ENCODE measurements at regions of chr7 and their contacts with region 1.

Region 1: GRCh38 chr7:148962823-148963582 is 65.3 kb downstream of the PDIA4 start:
- DNase-seq: peak in 34 of 35 experiments; percentile 25 to 82 (median 53)
- ATAC-seq: peak; percentile 44 to 64 (median 60)
- H3K4me3 ChIP-seq: peak overlapping the region; percentile 69 to 86
- H3K4me3 Mint-ChIP-seq: peak overlapping the region; percentile 85 to 90 (median 89)
- H3K27ac ChIP-seq: peak overlapping the region; percentile 73
- H3K27ac Mint-ChIP-seq: peak overlapping the region; percentile 90 to 93
- H3K4me1 ChIP-seq: peaks cover 0 to 33% of the 10 kb centered on the region in 2 experiments
- H3K4me1 Mint-ChIP-seq: peaks cover 20 to 27% (median 26%) of the 10 kb centered on the region in 3 donors
- H3K27me3 ChIP-seq: no peaks in the 10 kb centered on the region
- H3K27me3 Mint-ChIP-seq: no peaks in the 10 kb centered on the region

Region 2: GRCh38 chr7:148503875-148504487 is 459.0 kb before region 1 on chr7:
- CTCF ChIA-PET with region 1: interaction called, 6 to 11 read pairs
- POLR2A ChIA-PET with region 1: no interaction called
- DNase-seq: peak in 2 of 35 experiments; percentile 10 to 66
- ATAC-seq: no peak
- H3K4me3 ChIP-seq: no peak overlapping the region
- H3K4me3 Mint-ChIP-seq: no peak overlapping the region
- H3K27ac ChIP-seq: no peak overlapping the region
- H3K27ac Mint-ChIP-seq: peak overlapping the region in 1 of 2 donors; percentile 5
- H3K4me1 ChIP-seq: no peaks in the 10 kb centered on the region
- H3K4me1 Mint-ChIP-seq: peaks cover 5 to 15% (median 6%) of the 10 kb centered on the region in 3 donors
- H3K27me3 ChIP-seq: peaks cover 0 to 14% of the 10 kb centered on the region in 2 experiments
- H3K27me3 Mint-ChIP-seq: peaks cover 15 to 25% of the 10 kb centered on the region in 2 donors

Region 3: GRCh38 chr7:148575640-148576411 is 387.2 kb before region 1 on chr7:
- CTCF ChIA-PET with region 1: interaction called, 9 to 31 read pairs
- POLR2A ChIA-PET with region 1: no interaction called
- DNase-seq: peak; percentile 24 to 79 (median 60)
- ATAC-seq: peak; percentile 75 to 82 (median 80)
- H3K4me3 ChIP-seq: no peak overlapping the region
- H3K4me3 Mint-ChIP-seq: no peak overlapping the region
- H3K27ac ChIP-seq: no peak overlapping the region
- H3K27ac Mint-ChIP-seq: no peak overlapping the region
- H3K4me1 ChIP-seq: peaks cover 0 to 3% of the 10 kb centered on the region in 2 experiments
- H3K4me1 Mint-ChIP-seq: peaks cover 0 to 3% (median 2%) of the 10 kb centered on the region in 3 donors
- H3K27me3 ChIP-seq: no peaks in the 10 kb centered on the region
- H3K27me3 Mint-ChIP-seq: peaks cover 1 to 4% of the 10 kb centered on the region in 2 donors

Region 4: GRCh38 chr7:148884299-148885022 is 78.5 kb before region 1 on chr7:
- CTCF ChIA-PET with region 1: interaction called in 1 of 2 experiments, 11 read pairs
- POLR2A ChIA-PET with region 1: interaction called in 1 of 2 experiments, 3 read pairs
- DNase-seq: peak; percentile 83 to 96 (median 91)
- ATAC-seq: peak; percentile 89 to 95 (median 92)
- H3K4me3 ChIP-seq: peak overlapping the region; percentile 68 to 83
- H3K4me3 Mint-ChIP-seq: peak overlapping the region; percentile 86 to 95 (median 88)
- H3K27ac ChIP-seq: peak overlapping the region; percentile 69
- H3K27ac Mint-ChIP-seq: peak overlapping the region; percentile 86 to 89
- H3K4me1 ChIP-seq: peaks cover 9 to 13% of the 10 kb centered on the region in 2 experiments
- H3K4me1 Mint-ChIP-seq: peaks cover 16 to 35% (median 22%) of the 10 kb centered on the region in 3 donors
- H3K27me3 ChIP-seq: peaks cover 0 to 4% of the 10 kb centered on the region in 2 experiments
- H3K27me3 Mint-ChIP-seq: no peaks in the 10 kb centered on the region

Region 5: GRCh38 chr7:148983187-148984146 is 20.5 kb after region 1 on chr7:
- CTCF ChIA-PET with region 1: interaction called, 7 to 11 read pairs
- POLR2A ChIA-PET with region 1: no interaction called
- DNase-seq: peak; percentile 51 to 91 (median 82)
- ATAC-seq: peak; percentile 63 to 72 (median 70)
- H3K4me3 ChIP-seq: peak overlapping the region; percentile 52 to 74
- H3K4me3 Mint-ChIP-seq: peak overlapping the region; percentile 83 to 94 (median 84)
- H3K27ac ChIP-seq: peak overlapping the region; percentile 55
- H3K27ac Mint-ChIP-seq: peak overlapping the region; percentile 89 to 96
- H3K4me1 ChIP-seq: peaks cover 34 to 41% of the 10 kb centered on the region in 2 experiments
- H3K4me1 Mint-ChIP-seq: peaks cover 58 to 75% (median 63%) of the 10 kb centered on the region in 3 donors
- H3K27me3 ChIP-seq: no peaks in the 10 kb centered on the region
- H3K27me3 Mint-ChIP-seq: no peaks in the 10 kb centered on the region